PC-3 (cell line): ENCODE measurements at regions of chr10 and their contacts with region 1.

Region 1: GRCh38 chr10:80046629-80047441 is 31.6 kb upstream of the TMEM254 start:
- DNase-seq: peak; percentile 99
- ATAC-seq: peak; percentile 99
- H3K4me3 ChIP-seq: no peak overlapping the region
- H3K27ac ChIP-seq: no peak overlapping the region
- H3K4me1 ChIP-seq: 0 out of 2 replicates have a peak, but pooled peaks cover 3% of the 10 kb centered on the region
- H3K27me3 ChIP-seq: no peaks in the 10 kb centered on the region
- CTCF ChIP-seq: peak; percentile 100

Region 2: GRCh38 chr10:79454259-79454658 is 592.6 kb before region 1 on chr10:
- CTCF ChIA-PET with region 1: no interaction called
- POLR2A ChIA-PET with region 1: interaction called, 24 read pairs
- intact Hi-C with region 1: no loop called
- DNase-seq: peak; percentile 99
- ATAC-seq: peak; percentile 79
- H3K4me3 ChIP-seq: no peak overlapping the region
- H3K27ac ChIP-seq: no peak overlapping the region
- H3K4me1 ChIP-seq: peaks cover 29% of the 10 kb centered on the region
- H3K27me3 ChIP-seq: no peaks in the 10 kb centered on the region
- CTCF ChIP-seq: no peak

Region 3: DNA sequence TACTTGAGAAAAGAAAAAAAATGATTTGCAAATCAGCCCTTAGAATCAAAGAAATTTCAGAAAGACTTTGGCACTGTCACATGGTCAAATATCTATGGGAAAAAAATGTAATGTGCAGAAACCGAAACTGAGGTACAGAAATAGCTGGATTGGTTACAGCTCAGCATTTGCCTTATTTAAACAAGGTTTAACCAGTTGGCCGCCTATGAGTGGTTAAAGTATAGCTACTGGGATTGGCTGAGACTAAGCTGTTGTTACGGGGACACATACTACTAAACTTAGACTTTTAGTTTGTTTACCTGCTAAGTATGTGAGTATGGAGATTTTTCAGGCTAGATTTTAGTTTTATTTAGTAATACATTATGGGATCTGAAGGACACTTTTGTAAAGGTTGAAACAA is 136.5 kb before region 1 on chr10:
- CTCF ChIA-PET with region 1: interaction called, 4 read pairs
- POLR2A ChIA-PET with region 1: no interaction called
- intact Hi-C with region 1: loop called (anchors 1 kb)
- DNase-seq: no peak
- ATAC-seq: no peak
- H3K4me3 ChIP-seq: no peak overlapping the region
- H3K27ac ChIP-seq: no peak overlapping the region
- H3K4me1 ChIP-seq: peaks cover 5% of the 10 kb centered on the region
- H3K27me3 ChIP-seq: no peaks in the 10 kb centered on the region
- CTCF ChIP-seq: no peak

Region 4: GRCh38 chr10:79929409-79929904 is 117.4 kb before region 1 on chr10:
- CTCF ChIA-PET with region 1: no interaction called
- POLR2A ChIA-PET with region 1: no interaction called
- intact Hi-C with region 1: loop called (anchors 2 kb)
- DNase-seq: peak; percentile 95
- ATAC-seq: peak; percentile 85
- H3K4me3 ChIP-seq: 0 out of 2 replicates have a peak overlapping the region, but pooled peaks have one; percentile 7
- H3K27ac ChIP-seq: no peak overlapping the region
- H3K4me1 ChIP-seq: peaks cover 26% of the 10 kb centered on the region
- H3K27me3 ChIP-seq: peaks cover 19% of the 10 kb centered on the region
- CTCF ChIP-seq: peak; percentile 100

Region 5: GRCh38 chr10:79981450-79982361 is 65.1 kb before region 1 on chr10:
- CTCF ChIA-PET with region 1: interaction called, 3 read pairs
- POLR2A ChIA-PET with region 1: no interaction called
- intact Hi-C with region 1: loop called (anchors 2 kb)
- DNase-seq: peak; percentile 97
- ATAC-seq: peak; percentile 83
- H3K4me3 ChIP-seq: peak overlapping the region; percentile 74
- H3K27ac ChIP-seq: no peak overlapping the region
- H3K4me1 ChIP-seq: peaks cover 32% of the 10 kb centered on the region
- H3K27me3 ChIP-seq: no peaks in the 10 kb centered on the region
- CTCF ChIP-seq: peak; percentile 46

Region 6: DNA sequence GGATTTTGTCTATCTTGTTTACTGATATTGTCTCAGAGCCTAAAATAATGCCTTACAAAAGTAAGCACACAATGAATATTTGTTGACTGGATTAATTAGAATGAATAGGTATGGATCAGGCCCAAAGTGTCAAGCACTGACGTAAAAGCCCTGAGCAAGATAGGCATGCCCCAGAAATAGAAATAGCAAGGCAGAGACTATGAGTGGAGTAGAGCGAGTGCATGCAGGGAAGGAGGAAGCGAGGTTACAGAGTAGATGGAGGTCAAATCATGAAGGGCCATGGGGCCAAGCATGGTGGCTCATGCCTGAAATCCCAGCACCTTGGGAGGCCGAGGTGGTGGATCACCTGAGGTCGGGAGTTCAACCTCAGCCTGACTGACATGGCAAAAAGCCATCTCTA is 46.3 kb before region 1 on chr10:
- CTCF ChIA-PET with region 1: interaction called, 10 read pairs
- POLR2A ChIA-PET with region 1: no interaction called
- intact Hi-C with region 1: no loop called
- DNase-seq: no peak
- ATAC-seq: no peak
- H3K4me3 ChIP-seq: no peak overlapping the region
- H3K27ac ChIP-seq: no peak overlapping the region
- H3K4me1 ChIP-seq: peaks cover 6% of the 10 kb centered on the region
- H3K27me3 ChIP-seq: peaks cover 18% of the 10 kb centered on the region
- CTCF ChIP-seq: no peak

Region 7: GRCh38 chr10:80064120-80064886 is 17.5 kb after region 1 on chr10:
- CTCF ChIA-PET with region 1: interaction called, 15 read pairs
- POLR2A ChIA-PET with region 1: no interaction called
- intact Hi-C with region 1: no loop called
- DNase-seq: no peak
- ATAC-seq: no peak
- H3K4me3 ChIP-seq: no peak overlapping the region
- H3K27ac ChIP-seq: no peak overlapping the region
- H3K4me1 ChIP-seq: no peaks in the 10 kb centered on the region
- H3K27me3 ChIP-seq: no peaks in the 10 kb centered on the region
- CTCF ChIP-seq: no peak

Region 8: DNA sequence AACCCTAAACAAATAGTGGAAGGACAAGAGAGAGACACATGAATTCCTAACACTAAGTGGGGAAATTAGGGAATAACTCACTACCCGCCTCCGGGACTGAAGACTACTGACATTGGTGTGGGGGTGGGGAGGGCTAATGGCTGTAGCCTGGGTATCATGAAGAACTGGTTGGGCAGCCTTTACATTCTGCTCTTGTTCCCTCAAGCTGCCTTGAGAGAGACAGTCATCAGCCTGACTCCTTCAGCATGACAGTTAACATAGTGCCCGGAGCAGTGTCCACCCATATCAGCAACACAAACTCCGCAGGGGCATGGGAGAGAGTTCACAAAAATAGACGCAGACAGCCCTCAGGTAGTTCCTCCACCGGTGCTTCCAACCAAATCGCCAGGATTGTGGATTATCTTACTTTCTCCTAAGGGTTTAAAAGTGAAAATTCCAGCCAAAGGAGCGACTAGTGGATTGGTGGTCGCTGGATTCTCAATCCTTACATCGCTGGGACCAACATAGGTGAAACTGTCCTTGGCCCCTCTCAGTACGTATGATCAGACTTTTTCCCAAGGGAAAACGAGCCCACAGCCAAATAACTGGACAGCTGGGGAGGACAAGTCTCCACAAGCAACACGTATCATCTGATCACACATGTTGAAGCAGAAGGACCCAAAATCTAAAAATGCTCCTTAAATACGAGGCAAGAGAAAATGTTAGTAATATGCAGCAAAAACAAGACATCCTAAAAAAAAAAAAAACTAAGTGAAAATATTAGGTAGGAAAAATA is 54.3 kb after region 1 on chr10:
- CTCF ChIA-PET with region 1: no interaction called
- POLR2A ChIA-PET with region 1: no interaction called
- intact Hi-C with region 1: no loop called
- DNase-seq: peak; percentile 99
- ATAC-seq: peak; percentile 73
- H3K4me3 ChIP-seq: peak overlapping the region; percentile 42
- H3K27ac ChIP-seq: no peak overlapping the region
- H3K4me1 ChIP-seq: peaks cover 23% of the 10 kb centered on the region
- H3K27me3 ChIP-seq: no peaks in the 10 kb centered on the region
- CTCF ChIP-seq: no peak

Region 9: DNA sequence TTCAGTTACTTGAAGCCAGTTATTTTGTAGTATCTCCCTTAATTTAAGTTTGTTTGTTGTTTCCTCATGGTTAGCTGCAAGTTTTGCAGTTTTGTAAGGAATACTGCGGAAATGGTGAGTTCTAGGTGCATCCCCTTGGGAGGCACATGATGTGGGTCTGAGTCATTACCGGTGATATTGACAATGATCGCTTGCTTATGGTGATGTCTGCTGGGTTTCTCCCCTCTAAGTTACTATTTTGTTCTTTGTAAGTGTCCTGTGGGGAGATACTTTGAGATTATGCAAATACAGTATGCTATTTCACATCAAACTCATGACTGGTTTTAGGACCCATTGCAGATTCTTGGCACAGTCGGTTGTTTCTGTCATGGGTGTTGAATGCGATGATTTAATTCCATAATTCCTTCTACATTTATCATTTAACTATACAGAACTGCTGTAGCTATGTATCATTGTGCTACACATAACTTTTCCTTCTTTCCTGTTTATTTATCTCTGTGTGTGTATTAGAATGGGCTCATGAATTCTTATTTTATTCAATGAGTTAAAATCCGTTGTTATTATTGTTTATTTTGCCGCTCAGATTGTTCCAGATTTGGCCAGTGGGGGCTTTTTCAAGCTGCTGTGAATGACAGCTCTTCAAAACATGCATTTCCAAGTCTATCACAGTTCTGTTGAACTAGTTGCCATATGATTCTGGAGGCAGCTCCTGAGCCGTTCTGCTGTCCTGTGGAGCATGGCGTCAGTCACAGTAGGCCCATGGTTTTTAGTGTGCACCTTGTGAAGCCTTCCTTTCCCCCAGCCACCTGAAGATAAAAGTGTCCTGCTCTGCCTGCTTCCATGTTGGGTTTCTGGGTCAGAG is 425.6 kb after region 1 on chr10:
- CTCF ChIA-PET with region 1: no interaction called
- POLR2A ChIA-PET with region 1: no interaction called
- intact Hi-C with region 1: no loop called
- DNase-seq: no peak
- ATAC-seq: no peak
- H3K4me3 ChIP-seq: no peak overlapping the region
- H3K27ac ChIP-seq: no peak overlapping the region
- H3K4me1 ChIP-seq: no peaks in the 10 kb centered on the region
- H3K27me3 ChIP-seq: no peaks in the 10 kb centered on the region
- CTCF ChIP-seq: no peak